Mammary epithelial cell (primary cell): ENCODE measurements at regions of chr10 and their contacts with region 1.

Region 1: DNA sequence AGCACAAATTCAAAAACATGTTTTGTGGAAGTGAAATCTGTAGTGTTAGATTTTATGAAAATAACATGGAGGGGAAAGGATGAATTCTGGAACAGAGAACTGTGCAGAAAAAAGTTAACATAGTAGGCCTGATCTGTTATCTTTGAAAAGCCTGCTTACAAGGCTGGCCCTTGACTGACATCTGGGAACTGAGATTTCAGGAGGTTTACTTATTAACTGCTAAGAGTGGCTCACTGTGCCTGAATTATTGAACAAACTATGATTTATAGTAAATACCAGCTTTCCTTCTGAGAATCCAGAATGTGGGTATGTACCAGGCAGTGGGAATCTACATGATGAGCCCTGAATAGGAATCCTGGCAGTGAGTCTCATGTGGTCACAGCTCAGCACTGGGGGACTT is 30.5 kb downstream of the NSUN6 start:
- DNase-seq: no peak
- H3K4me3 ChIP-seq: no peak overlapping the region
- H3K27ac ChIP-seq: no peak overlapping the region
- H3K4me1 ChIP-seq: no peaks in the 10 kb centered on the region
- H3K27me3 ChIP-seq: no peaks in the 10 kb centered on the region
- CTCF ChIP-seq: no peak

Region 2: DNA sequence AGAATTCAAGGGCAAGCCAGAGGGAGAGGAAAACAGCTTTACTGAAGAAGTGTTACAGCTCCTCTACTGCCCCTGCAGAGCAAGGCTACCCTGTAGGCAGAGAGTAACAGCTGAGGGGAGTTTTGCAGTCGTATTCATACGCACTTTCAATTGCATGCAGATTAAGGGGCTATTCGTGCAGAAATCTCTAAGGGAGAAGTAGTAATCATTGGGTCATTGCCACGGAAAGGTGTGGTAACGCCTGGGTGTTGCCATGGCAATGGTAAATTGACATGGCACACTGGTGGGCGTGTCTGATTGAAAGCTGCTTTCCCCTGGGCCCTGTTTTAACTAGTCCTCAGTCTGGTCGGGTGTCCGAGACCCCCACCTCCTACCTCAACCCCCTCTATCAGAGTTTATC is 196.7 kb before region 1 on chr10:
- CTCF ChIA-PET with region 1: no interaction called
- dilution Hi-C with region 1: no loop called
- in situ Hi-C with region 1: no loop called
- intact Hi-C with region 1: no loop called
- DNase-seq: no peak
- H3K4me3 ChIP-seq: no peak overlapping the region
- H3K27ac ChIP-seq: no peak overlapping the region
- H3K4me1 ChIP-seq: no peaks in the 10 kb centered on the region
- H3K27me3 ChIP-seq: no peaks in the 10 kb centered on the region
- CTCF ChIP-seq: no peak

Region 3: DNA sequence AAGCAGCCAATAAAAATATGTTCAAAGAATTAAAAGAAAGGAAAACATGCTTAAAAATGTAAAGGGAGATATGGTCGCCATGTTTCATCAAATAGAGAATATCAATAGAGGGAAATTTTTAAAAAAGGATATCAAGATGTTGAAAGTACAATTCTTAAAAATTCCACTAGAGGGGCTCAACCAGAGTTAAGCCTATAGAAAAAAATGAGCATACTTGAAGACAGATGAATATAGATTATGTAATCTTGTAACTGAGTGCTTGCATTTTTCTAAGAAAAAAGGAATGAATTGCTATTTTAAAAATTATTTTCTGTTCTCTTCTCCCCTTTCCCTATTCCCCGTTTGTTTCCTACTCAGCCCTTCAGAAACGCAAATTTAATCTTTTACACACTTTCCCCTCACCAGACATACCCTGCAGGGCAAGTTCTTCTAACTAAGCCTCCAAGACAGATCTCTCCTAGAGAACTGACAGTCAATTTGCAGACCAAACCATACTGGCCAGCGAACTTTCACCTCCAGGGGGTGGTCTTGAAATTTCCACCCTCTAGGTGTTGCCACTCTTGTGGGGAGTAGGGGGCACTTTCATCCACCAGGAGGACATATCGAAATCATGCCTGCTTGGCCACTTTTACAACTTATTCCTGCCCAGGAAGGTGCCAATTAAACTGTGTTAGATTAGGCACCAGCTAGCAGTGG is 37.1 kb before region 1 on chr10:
- CTCF ChIA-PET with region 1: no interaction called
- dilution Hi-C with region 1: no loop called
- in situ Hi-C with region 1: no loop called
- intact Hi-C with region 1: no loop called
- DNase-seq: no peak
- H3K4me3 ChIP-seq: no peak overlapping the region
- H3K27ac ChIP-seq: no peak overlapping the region
- H3K4me1 ChIP-seq: peaks cover 6% of the 10 kb centered on the region
- H3K27me3 ChIP-seq: no peaks in the 10 kb centered on the region
- CTCF ChIP-seq: peak; percentile 8 to 19

Region 4: GRCh38 chr10:18594574-18595156 is 26.2 kb before region 1 on chr10:
- CTCF ChIA-PET with region 1: interaction called, 22 read pairs
- dilution Hi-C with region 1: no loop called
- in situ Hi-C with region 1: no loop called
- intact Hi-C with region 1: no loop called
- DNase-seq: no peak
- H3K4me3 ChIP-seq: no peak overlapping the region
- H3K27ac ChIP-seq: no peak overlapping the region
- H3K4me1 ChIP-seq: no peaks in the 10 kb centered on the region
- H3K27me3 ChIP-seq: no peaks in the 10 kb centered on the region
- CTCF ChIP-seq: peak; percentile 30 to 37

Region 5: DNA sequence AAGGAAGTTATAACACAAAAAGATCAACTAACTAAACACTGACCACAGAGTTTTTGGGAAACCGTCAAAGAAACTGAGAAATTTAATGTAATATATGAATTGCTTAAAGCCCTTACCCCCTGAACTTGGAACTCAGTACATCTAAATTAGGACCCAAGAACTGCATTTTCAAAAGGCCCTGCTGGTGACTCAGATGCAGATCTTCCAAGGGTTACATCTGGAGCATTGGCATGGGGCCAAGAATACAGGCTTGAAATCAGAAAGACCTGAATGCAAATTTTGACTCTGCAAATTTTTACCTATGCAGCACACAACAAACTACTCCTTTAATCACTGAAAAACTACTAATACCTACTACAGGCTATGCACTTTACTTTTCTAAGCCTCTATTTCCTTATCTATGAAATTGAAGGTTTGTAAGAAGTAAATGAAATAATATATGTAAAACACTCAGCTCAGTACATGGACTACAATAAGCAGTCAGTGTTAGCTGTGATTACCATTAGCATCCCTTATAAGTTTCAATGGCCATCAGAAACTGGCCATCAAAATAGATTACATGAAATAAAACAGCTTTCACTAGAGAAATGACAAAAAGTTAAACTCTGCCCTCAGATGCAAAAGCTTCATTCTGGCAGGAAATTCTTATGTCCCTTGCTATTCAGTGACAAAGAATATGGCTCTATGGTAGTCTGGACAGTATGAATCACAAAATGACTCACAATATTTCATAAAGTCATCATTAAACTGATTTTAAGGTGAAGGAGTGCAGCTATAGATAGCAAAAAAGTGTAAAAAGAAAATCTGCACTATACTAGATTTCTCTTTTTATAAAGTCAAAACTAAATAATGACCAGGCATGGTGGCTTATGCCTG is 13.1 kb before region 1 on chr10:
- CTCF ChIA-PET with region 1: no interaction called
- dilution Hi-C with region 1: no loop called
- in situ Hi-C with region 1: no loop called
- intact Hi-C with region 1: no loop called
- DNase-seq: peak; percentile 67
- H3K4me3 ChIP-seq: no peak overlapping the region
- H3K27ac ChIP-seq: peak overlapping the region; percentile 51
- H3K4me1 ChIP-seq: peaks cover 24% of the 10 kb centered on the region
- H3K27me3 ChIP-seq: no peaks in the 10 kb centered on the region
- CTCF ChIP-seq: no peak

Region 6: DNA sequence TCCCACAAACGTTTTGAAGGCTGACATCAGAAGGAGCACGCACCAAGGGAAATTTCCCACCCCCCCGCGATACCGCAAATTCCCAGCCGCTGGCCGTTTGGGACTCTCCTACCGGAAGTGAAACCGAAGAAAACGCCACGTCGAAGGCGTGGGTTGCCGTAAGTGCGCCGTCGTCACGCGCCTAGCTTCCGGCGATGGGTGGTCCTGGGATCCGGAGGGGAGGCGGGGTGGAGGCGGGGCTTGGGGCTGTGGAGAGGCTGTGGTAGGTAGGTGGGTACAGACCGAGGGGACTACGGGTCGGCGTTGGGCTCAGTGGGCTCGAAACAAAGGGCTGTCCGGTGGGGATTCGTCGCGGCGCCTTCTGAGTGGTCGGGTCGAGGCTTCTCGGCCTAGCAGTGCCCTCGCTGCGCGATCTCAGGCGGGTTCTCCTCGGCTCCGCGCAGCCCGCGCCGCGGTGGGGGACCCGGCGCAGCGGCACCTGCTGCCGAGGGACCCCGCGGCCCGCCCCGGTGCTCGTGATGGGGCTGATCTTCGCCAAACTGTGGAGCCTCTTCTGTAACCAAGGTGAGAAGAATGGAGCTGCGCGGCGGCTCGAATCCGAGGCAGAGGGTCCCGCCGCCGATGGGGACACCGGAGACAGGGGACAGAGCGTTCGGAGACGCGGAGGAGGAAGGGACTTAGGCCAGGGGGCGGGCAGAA is 38.4 kb after region 1 on chr10 and contains the start of gene ARL5B:
- CTCF ChIA-PET with region 1: no interaction called
- dilution Hi-C with region 1: loop called (anchors 5 kb)
- in situ Hi-C with region 1: no loop called
- intact Hi-C with region 1: no loop called
- DNase-seq: peak; percentile 99
- H3K4me3 ChIP-seq: peak within 1 kb of the TSS; percentile 93 to 95 (median 94)
- H3K27ac ChIP-seq: peak within 1 kb of the TSS; percentile 100
- H3K4me1 ChIP-seq: peaks cover 14% of the 10 kb centered on the region
- H3K27me3 ChIP-seq: no peaks in the 10 kb centered on the region
- CTCF ChIP-seq: no peak
- total RNA-seq, gene ARL5B: 14.1 to 16.8 TPM